Activated CD8-positive, alpha-beta T cell treated with anti-CD3 and anti-CD28 coated beads for 36 hours (primary cell): ENCODE measurements at regions of chr11 and their contacts with region 1.

Region 1: GRCh38 chr11:19566583-19567379 is 145.9 kb upstream of the NAV2 start:
- DNase-seq: no peak
- ATAC-seq: no peak
- H3K4me3 Mint-ChIP-seq: no peak overlapping the region
- H3K27ac Mint-ChIP-seq: no peak overlapping the region
- H3K4me1 Mint-ChIP-seq: no peaks in the 10 kb centered on the region
- H3K27me3 Mint-ChIP-seq: peaks cover 11% of the 10 kb centered on the region
- CTCF ChIP-seq: no peak

Region 2: GRCh38 chr11:19472679-19473078 is 94.1 kb before region 1 on chr11:
- CTCF ChIA-PET with region 1: no interaction called
- POLR2A ChIA-PET with region 1: no interaction called
- intact Hi-C with region 1: no loop called
- DNase-seq: no peak
- ATAC-seq: no peak
- H3K4me3 Mint-ChIP-seq: no peak overlapping the region
- H3K27ac Mint-ChIP-seq: no peak overlapping the region
- H3K4me1 Mint-ChIP-seq: no peaks in the 10 kb centered on the region
- H3K27me3 Mint-ChIP-seq: peaks cover 6% of the 10 kb centered on the region
- CTCF ChIP-seq: no peak

Region 3: DNA sequence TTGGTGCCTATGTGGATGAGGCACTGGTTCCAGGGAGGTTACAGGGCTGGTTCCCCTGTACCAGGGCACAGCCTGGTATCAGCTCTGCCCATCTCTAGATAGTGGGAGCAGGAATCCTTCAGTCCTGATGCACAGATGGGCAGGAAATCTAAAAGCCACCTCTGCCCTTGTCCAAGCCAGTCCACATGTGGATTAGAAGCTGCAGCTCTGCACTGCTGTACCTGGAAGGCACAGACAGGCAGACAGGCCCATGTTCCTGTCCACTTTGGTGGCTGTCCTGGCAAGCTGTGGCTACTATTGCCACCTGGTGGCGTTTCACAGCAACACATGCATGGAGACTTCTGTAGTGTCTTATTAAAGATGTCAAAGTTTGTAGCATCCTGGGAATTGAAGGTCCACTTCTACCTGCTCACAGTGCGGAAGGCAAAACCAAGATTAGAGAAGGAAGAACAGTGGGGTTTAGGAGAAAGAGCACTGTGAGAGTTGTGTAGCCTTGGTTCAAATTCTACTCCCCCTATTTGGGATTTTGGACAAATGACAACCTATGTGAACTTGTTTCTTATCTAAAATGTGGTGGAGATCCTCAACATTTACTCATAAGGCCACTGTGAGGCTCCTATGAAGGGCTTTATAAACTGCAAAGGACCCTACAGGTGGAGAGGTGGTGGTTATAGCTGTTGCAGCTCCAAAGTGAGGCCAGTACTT is 176.0 kb after region 1 on chr11:
- CTCF ChIA-PET with region 1: interaction called, 56 read pairs
- POLR2A ChIA-PET with region 1: no interaction called
- intact Hi-C with region 1: loop called (anchors 2 kb)
- DNase-seq: peak; percentile 77
- ATAC-seq: peak; percentile 84
- H3K4me3 Mint-ChIP-seq: no peak overlapping the region
- H3K27ac Mint-ChIP-seq: no peak overlapping the region
- H3K4me1 Mint-ChIP-seq: no peaks in the 10 kb centered on the region
- H3K27me3 Mint-ChIP-seq: peaks cover 6% of the 10 kb centered on the region
- CTCF ChIP-seq: peak; percentile 72

Region 4: GRCh38 chr11:19903620-19904069 is 336.9 kb after region 1 on chr11:
- CTCF ChIA-PET with region 1: interaction called, 11 read pairs
- POLR2A ChIA-PET with region 1: no interaction called
- intact Hi-C with region 1: loop called (anchors 5 kb)
- DNase-seq: peak; percentile 76
- ATAC-seq: no peak
- H3K4me3 Mint-ChIP-seq: no peak overlapping the region
- H3K27ac Mint-ChIP-seq: no peak overlapping the region
- H3K4me1 Mint-ChIP-seq: no peaks in the 10 kb centered on the region
- H3K27me3 Mint-ChIP-seq: no peaks in the 10 kb centered on the region
- CTCF ChIP-seq: peak; percentile 73